ENCODE measurements at regions of chr5 and their contacts with region 1.

Region 1: DNA sequence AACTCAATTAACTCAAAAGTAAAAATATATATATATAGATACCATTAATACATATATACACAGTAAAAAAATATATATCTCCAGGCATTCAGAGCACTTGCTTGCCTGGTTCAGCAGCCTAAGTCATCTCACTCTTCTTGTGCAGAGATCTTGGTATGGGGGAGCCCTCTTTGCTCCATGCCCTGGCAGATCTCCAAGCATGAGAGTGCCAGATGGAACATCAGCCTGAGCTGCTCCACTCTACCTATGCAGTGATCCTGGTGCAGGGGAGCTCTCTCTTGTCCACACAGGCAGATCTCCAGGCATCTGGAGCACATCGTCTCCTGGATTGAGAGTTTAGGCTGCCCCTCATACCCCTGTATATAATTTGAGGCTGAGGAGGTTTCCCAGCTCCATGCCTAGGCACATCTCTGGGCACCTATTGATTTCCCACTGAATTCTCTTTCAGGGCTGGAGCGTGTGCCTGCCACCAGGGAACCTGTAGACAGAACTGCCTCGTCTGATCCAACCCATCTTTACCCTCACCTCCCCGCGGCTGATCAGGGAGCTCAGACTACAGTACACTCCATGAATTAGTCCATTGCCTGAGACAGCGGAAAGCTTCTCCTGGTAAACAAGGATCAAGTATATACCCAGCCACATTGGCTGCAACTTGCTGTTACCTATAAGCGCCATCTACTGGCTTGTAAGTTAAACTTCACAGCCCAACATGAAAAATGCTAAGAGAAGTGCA is 342.4 kb upstream of the GRIA1 start:
- DNase-seq: peak; percentile 49
- ATAC-seq: peak; percentile 53
- H3K4me3 ChIP-seq: no peak overlapping the region
- H3K27ac ChIP-seq: no peak overlapping the region
- H3K4me1 ChIP-seq: no peaks in the 10 kb centered on the region
- H3K27me3 ChIP-seq: no peaks in the 10 kb centered on the region
- CTCF ChIP-seq: peak; percentile 71

Region 2: GRCh38 chr5:152532714-152533113 is 615.3 kb before region 1 on chr5:
- CTCF ChIA-PET with region 1: no interaction called
- POLR2A ChIA-PET with region 1: no interaction called
- intact Hi-C with region 1: loop called (anchors 2 kb)
- DNase-seq: peak; percentile 75
- ATAC-seq: peak; percentile 57
- H3K4me3 ChIP-seq: no peak overlapping the region
- H3K27ac ChIP-seq: no peak overlapping the region
- H3K4me1 ChIP-seq: no peaks in the 10 kb centered on the region
- H3K27me3 ChIP-seq: peaks cover 18% of the 10 kb centered on the region
- CTCF ChIP-seq: peak; percentile 81

Region 3: DNA sequence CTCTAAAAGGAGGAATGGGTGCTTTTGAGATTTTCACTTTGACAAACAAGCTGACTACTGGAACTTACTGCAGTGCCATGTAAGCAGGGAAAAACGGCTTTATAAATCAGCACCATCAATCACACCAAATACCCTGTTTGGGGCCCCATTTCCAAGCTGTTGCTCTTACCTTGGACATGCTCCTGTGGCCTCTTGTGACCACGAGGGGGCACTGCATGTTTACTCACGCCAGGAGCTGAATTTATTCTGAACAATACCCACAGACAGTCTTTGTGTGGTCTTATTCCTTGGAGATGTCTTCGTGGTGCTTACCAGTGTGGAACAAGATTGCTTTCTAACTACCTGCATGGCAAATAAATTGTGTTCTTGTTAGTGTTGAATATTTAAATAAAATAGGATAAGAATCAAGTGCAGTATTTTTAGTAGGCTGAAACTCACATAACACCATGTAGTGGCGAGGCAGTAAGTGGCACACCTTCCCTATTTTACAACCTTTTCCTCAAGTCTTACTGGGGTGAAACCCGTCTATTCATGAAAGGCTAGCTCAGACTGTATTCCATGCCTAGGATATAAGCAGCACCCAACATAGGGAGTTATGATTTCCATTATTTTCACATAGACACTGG is 587.4 kb before region 1 on chr5:
- CTCF ChIA-PET with region 1: no interaction called
- POLR2A ChIA-PET with region 1: no interaction called
- intact Hi-C with region 1: loop called (anchors 1 kb)
- DNase-seq: peak; percentile 56
- ATAC-seq: peak; percentile 50; the same call in 1 of the 2 replicates
- H3K4me3 ChIP-seq: no peak overlapping the region
- H3K27ac ChIP-seq: no peak overlapping the region
- H3K4me1 ChIP-seq: no peaks in the 10 kb centered on the region
- H3K27me3 ChIP-seq: no peaks in the 10 kb centered on the region
- CTCF ChIP-seq: peak; percentile 87

Region 4: GRCh38 chr5:153619771-153620170 is 471.7 kb after region 1 on chr5:
- CTCF ChIA-PET with region 1: no interaction called
- POLR2A ChIA-PET with region 1: no interaction called
- intact Hi-C with region 1: no loop called
- DNase-seq: peak; percentile 19
- ATAC-seq: peak; percentile 43
- H3K4me3 ChIP-seq: no peak overlapping the region
- H3K27ac ChIP-seq: no peak overlapping the region
- H3K4me1 ChIP-seq: no peaks in the 10 kb centered on the region
- H3K27me3 ChIP-seq: no peaks in the 10 kb centered on the region
- CTCF ChIP-seq: no peak